ENCODE measurements at regions of chr1 and their contacts with region 1.

Region 1: DNA sequence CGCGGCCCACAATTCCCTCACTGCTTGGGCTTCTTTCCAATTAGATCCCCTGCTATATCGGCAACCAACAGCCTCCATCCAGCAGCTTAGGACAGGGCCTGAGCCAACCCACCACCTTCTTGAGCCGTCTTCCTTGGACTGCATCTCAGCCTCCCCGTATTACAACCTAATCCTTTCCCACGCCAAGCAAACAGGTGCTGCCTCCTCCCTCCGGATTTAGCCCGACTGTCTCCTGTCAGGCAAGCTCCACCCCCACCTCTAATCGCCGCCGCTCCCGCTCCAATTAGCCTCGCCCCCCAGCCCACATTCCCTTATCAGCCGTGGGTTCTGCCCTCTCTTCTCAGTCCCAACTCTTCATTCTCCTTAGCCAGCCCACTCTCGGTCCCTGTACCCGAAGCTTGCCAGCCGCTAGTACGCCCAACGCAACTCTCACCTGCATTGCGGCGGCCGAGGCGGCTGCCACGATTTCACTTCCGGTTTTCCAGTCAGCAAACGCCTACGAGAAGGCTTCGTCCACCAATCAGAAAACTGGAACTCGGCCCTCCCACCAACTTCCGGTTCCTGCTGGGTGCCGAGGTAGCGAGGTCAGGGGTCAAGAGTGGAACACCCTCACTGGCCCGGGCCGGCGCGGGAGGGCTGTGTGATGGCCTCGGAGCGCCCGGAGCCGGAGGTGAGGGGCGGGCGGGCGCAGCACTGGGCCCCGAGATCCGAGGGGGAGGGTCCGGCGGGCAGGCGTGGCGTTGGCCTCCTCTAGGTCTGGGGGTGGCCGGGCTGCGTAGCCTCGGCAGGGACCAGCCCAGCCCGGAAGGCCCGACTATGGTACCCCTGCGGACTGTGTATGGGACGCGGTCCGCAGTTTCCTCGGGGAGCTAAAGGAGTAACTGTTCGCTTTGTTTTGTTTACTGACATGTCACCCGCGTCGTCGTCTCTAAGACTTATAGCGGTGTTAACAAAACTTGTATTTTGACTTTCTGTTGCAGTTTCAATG is at the starts of genes MED8 and SZT2:
- DNase-seq: peak; percentile 95
- ATAC-seq: peak; percentile 96
- H3K4me3 Mint-ChIP-seq: peak within 1 kb of the TSS; percentile 100
- H3K27ac Mint-ChIP-seq: peak within 1 kb of the TSS; percentile 96
- H3K4me1 Mint-ChIP-seq: peaks cover 33% of the 10 kb centered on the region
- H3K27me3 Mint-ChIP-seq: no peaks in the 10 kb centered on the region
- total RNA-seq, gene MED8: 33.1 to 35.1 TPM
- total RNA-seq, gene SZT2: 57.2 to 58.3 TPM

Region 2: GRCh38 chr1:43358746-43359693 is 30.6 kb before region 1 on chr1 and contains the start of gene CDC20:
- CTCF ChIA-PET with region 1: interaction called, 3 read pairs
- POLR2A ChIA-PET with region 1: interaction called, 16 read pairs
- DNase-seq: peak; percentile 100
- ATAC-seq: peak; percentile 99
- H3K4me3 Mint-ChIP-seq: peak within 1 kb of the TSS; percentile 95
- H3K27ac Mint-ChIP-seq: peak within 1 kb of the TSS; percentile 92
- H3K4me1 Mint-ChIP-seq: peaks cover 54% of the 10 kb centered on the region
- H3K27me3 Mint-ChIP-seq: no peaks in the 10 kb centered on the region
- total RNA-seq, gene CDC20: 214 to 232 TPM

Region 3: GRCh38 chr1:43367904-43368645 is 21.5 kb before region 1 on chr1 and contains the start of gene ELOVL1:
- CTCF ChIA-PET with region 1: interaction called, 4 read pairs
- POLR2A ChIA-PET with region 1: interaction called, 17 read pairs
- DNase-seq: peak; percentile 93
- ATAC-seq: peak; percentile 89
- H3K4me3 Mint-ChIP-seq: peak within 1 kb of the TSS; percentile 92
- H3K27ac Mint-ChIP-seq: peak within 1 kb of the TSS; percentile 87
- H3K4me1 Mint-ChIP-seq: peaks cover 46% of the 10 kb centered on the region
- H3K27me3 Mint-ChIP-seq: no peaks in the 10 kb centered on the region
- total RNA-seq, gene ELOVL1: 69.6 to 71.0 TPM

Region 4: DNA sequence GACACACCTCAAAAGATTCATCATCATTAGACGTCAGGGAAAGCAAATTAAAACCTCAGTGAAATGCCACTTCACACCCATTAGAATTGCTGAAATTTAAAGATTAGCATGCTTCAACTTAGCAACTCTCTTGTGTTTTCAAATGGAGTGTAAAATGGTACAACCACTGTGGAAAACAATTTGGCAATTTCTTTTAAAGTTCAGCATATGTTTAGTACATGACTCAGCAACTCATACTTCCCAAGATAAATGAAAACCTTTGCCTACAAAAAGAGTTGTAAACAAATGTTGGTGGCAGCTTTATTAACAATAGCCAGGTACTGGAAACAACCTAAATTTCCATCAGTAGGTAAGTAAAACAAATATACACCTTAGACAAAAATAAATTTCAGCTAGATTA is 360.5 kb after region 1 on chr1:
- CTCF ChIA-PET with region 1: no interaction called
- POLR2A ChIA-PET with region 1: no interaction called
- DNase-seq: no peak
- ATAC-seq: no peak
- H3K4me3 Mint-ChIP-seq: no peak overlapping the region
- H3K27ac Mint-ChIP-seq: no peak overlapping the region
- H3K4me1 Mint-ChIP-seq: no peaks in the 10 kb centered on the region
- H3K27me3 Mint-ChIP-seq: no peaks in the 10 kb centered on the region